GM10248 (cell line): ENCODE measurements at regions of chr1 and their contacts with region 1.

Region 1: GRCh38 chr1:179742717-179743678 is at the start of gene FAM163A:
- DNase-seq: peak; percentile 18
- CTCF ChIP-seq: no peak

Region 2: DNA sequence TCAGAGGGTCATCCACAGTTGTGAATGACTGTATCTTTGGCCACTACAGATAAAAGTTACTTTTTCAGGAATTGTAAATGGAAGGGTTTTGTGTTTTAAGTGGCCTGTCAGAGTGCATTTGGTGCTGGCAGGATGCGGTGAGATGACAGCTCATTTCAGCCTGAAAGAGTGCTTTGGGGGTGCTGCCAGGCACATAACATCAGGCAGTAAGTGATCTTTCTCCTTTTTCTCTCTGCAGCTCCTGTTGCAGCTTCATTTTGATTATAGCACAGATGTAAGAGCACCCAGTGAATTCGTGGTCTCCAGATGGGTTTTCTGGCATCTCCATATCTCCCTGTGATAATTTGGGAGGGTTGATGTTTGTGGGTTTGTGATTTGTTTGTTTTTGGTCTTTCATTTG is 14.7 kb before region 1 on chr1:
- CTCF ChIA-PET with region 1: interaction called, 10 read pairs
- POLR2A ChIA-PET with region 1: no interaction called
- DNase-seq: no peak
- CTCF ChIP-seq: no peak

Region 3: GRCh38 chr1:179761296-179761695 is 18.3 kb after region 1 on chr1:
- CTCF ChIA-PET with region 1: interaction called, 10 read pairs
- POLR2A ChIA-PET with region 1: no interaction called
- DNase-seq: no peak
- CTCF ChIP-seq: no peak